ENCODE measurements at regions of chr15 and their contacts with region 1.

Region 1: GRCh38 chr15:92820236-92821021 is 79.7 kb upstream of the CHD2 start:
- DNase-seq: peak; percentile 93 to 95
- H3K4me3 ChIP-seq: peak overlapping the region; percentile 17
- H3K4me3 Mint-ChIP-seq: peak overlapping the region; percentile 83
- H3K27ac Mint-ChIP-seq: peak overlapping the region; percentile 94
- H3K4me1 ChIP-seq: peaks cover 38% of the 10 kb centered on the region
- H3K4me1 Mint-ChIP-seq: peaks cover 33% of the 10 kb centered on the region
- H3K27me3 ChIP-seq: no peaks in the 10 kb centered on the region
- H3K27me3 Mint-ChIP-seq: no peaks in the 10 kb centered on the region
- CTCF ChIP-seq: no peak

Region 2: DNA sequence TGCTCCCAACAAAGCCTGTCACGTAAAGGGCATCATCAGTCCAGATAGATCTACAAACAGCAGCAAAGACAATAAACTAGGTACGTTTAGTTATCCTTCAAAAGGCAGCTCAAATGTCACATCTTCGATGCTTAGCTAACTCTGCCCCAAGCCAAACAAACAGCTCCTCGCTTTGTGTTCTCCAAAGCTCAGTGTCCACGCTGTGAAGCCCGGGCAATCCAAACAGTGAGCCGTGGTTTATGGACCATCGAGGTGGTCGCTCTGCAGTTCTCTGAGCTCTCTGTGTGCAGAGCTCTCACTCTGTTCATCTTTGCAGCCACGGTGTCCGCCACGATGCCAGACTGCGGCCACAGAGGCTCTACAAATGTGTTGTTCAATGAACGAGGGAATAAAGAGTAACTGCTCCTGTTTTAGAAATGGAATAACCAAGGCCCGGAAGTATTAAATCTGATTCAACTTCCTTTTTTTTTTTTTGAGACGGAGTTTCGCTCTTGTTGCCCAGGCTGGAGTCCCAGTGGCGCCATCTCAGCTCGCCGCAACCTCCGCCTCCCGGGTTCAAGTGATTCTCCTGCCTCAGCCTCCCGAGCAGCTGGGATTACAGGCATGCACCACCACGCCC is 47.7 kb before region 1 on chr15:
- CTCF ChIA-PET with region 1: no interaction called
- POLR2A ChIA-PET with region 1: no interaction called
- intact Hi-C with region 1: no loop called
- DNase-seq: no peak
- H3K4me3 ChIP-seq: no peak overlapping the region
- H3K4me3 Mint-ChIP-seq: no peak overlapping the region
- H3K27ac Mint-ChIP-seq: no peak overlapping the region
- H3K4me1 ChIP-seq: no peaks in the 10 kb centered on the region
- H3K4me1 Mint-ChIP-seq: no peaks in the 10 kb centered on the region
- H3K27me3 ChIP-seq: no peaks in the 10 kb centered on the region
- H3K27me3 Mint-ChIP-seq: no peaks in the 10 kb centered on the region
- CTCF ChIP-seq: no peak

Region 3: DNA sequence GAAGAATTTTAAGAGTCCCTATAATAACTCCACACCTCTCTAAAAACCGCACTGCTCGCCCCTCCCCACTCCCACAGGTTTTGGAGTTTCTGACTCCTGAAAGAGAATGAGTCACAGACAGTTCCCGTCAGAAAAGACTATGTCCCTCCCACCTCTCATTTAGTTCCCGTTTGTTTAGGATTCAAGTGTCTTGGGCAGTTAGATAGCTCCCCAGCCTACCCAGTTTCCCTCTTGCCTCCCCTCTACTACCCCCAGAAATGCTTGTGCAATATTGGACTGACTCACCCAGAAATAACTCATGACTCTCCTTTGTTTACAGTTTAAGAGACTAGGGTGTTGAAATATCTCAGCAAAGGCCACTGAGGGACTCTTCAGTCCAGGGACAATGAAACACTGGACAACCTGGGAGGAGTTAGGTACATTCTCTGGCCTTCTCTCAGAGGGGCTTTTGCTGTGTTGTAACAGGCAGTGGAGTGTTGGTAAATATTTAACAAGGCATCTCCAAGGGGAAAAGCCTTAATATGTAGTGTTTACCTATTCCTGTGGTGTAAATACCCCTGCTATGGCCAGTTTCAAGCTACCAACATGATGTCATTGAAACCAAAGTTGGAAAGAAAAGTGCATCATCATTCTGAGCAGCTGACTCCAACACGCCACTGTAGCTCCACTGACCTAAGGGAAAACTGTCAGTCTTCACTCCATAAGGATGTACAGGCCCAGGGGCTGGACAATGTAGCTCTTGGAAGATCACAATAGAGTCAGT is 16.4 kb before region 1 on chr15:
- CTCF ChIA-PET with region 1: interaction called, 8 read pairs
- POLR2A ChIA-PET with region 1: interaction called, 6 read pairs
- intact Hi-C with region 1: loop called (anchors 1 kb)
- DNase-seq: peak; percentile 89 to 92
- H3K4me3 ChIP-seq: no peak overlapping the region
- H3K4me3 Mint-ChIP-seq: peak overlapping the region; percentile 6
- H3K27ac Mint-ChIP-seq: peak overlapping the region; percentile 83
- H3K4me1 ChIP-seq: peaks cover 41% of the 10 kb centered on the region
- H3K4me1 Mint-ChIP-seq: peaks cover 16% of the 10 kb centered on the region
- H3K27me3 ChIP-seq: no peaks in the 10 kb centered on the region
- H3K27me3 Mint-ChIP-seq: no peaks in the 10 kb centered on the region
- CTCF ChIP-seq: no peak

Region 4: GRCh38 chr15:92831655-92832328 is 11.4 kb after region 1 on chr15:
- CTCF ChIA-PET with region 1: interaction called, 5 read pairs
- POLR2A ChIA-PET with region 1: interaction called, 17 read pairs
- intact Hi-C with region 1: loop called (anchors 1 kb)
- DNase-seq: peak; percentile 94 to 96
- H3K4me3 ChIP-seq: peak overlapping the region; percentile 13; the same call in 1 of the 2 replicates
- H3K4me3 Mint-ChIP-seq: peak overlapping the region; percentile 54
- H3K27ac Mint-ChIP-seq: peak overlapping the region; percentile 66
- H3K4me1 ChIP-seq: peaks cover 22% of the 10 kb centered on the region
- H3K4me1 Mint-ChIP-seq: peaks cover 13% of the 10 kb centered on the region
- H3K27me3 ChIP-seq: no peaks in the 10 kb centered on the region
- H3K27me3 Mint-ChIP-seq: no peaks in the 10 kb centered on the region
- CTCF ChIP-seq: no peak

Measured in Caco-2 (cell line).